Mammary epithelial cell (primary cell): ENCODE measurements at regions of chr5 and their contacts with region 1.

Region 1: DNA sequence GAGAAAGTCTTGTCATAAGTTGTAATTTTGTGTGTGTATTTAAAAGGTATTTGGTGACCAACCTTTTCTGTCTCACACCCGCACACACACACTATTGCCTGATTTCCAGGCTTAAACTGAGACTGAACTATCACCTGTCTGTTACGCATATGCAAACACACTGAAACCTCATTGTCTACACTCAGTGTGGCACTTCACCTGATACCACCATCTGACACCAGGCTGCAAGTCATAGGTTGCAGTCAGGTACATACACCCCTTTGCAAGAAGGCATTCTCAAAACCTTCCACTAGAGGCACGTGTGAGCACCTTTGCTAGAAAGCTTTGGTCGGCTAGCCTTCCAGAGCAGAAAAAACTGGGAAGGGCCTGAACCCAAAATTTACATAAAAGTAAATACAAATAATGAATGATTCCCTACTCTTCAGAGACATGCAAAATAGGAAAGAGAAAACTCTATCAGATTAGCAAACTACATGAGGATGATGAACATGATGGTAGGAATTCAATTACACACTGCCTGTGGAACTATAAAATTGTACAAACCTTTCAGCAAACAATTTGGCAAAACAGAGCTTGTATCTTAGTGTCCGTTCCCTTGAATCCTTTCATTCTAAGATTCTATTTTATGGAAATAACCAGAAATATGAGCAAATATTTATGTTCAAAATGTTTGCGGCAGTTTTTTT is 5.9 kb upstream of the FOXD1 start:
- DNase-seq: peak; percentile 69
- H3K4me3 ChIP-seq: no peak overlapping the region
- H3K27ac ChIP-seq: no peak overlapping the region
- H3K4me1 ChIP-seq: peaks cover 12% of the 10 kb centered on the region
- H3K27me3 ChIP-seq: peaks cover 3% of the 10 kb centered on the region
- CTCF ChIP-seq: peak; percentile 92 to 98

Region 2: GRCh38 chr5:73088026-73088425 is 366.5 kb before region 1 on chr5:
- CTCF ChIA-PET with region 1: interaction called, 30 read pairs
- dilution Hi-C with region 1: no loop called
- in situ Hi-C with region 1: no loop called
- intact Hi-C with region 1: loop called (anchors 1 kb)
- DNase-seq: no peak
- H3K4me3 ChIP-seq: no peak overlapping the region
- H3K27ac ChIP-seq: no peak overlapping the region
- H3K4me1 ChIP-seq: no peaks in the 10 kb centered on the region
- H3K27me3 ChIP-seq: no peaks in the 10 kb centered on the region
- CTCF ChIP-seq: no peak

Region 3: GRCh38 chr5:73498057-73499008 is 43.8 kb after region 1 on chr5 and contains the start of gene BTF3:
- CTCF ChIA-PET with region 1: interaction called, 4 read pairs
- dilution Hi-C with region 1: no loop called
- in situ Hi-C with region 1: no loop called
- intact Hi-C with region 1: loop called (anchors 2 kb)
- DNase-seq: peak; percentile 96
- H3K4me3 ChIP-seq: peak within 1 kb of the TSS; percentile 90 to 97 (median 92)
- H3K27ac ChIP-seq: peak within 1 kb of the TSS; percentile 95
- H3K4me1 ChIP-seq: peaks cover 8% of the 10 kb centered on the region
- H3K27me3 ChIP-seq: no peaks in the 10 kb centered on the region
- CTCF ChIP-seq: no peak
- total RNA-seq, gene BTF3: 365 to 681 TPM

Region 4: GRCh38 chr5:73540192-73540591 is 85.7 kb after region 1 on chr5:
- CTCF ChIA-PET with region 1: no interaction called
- dilution Hi-C with region 1: no loop called
- in situ Hi-C with region 1: no loop called
- intact Hi-C with region 1: loop called (anchors 1 kb)
- DNase-seq: peak; percentile 94
- H3K4me3 ChIP-seq: no peak overlapping the region
- H3K27ac ChIP-seq: no peak overlapping the region
- H3K4me1 ChIP-seq: peaks cover 45% of the 10 kb centered on the region
- H3K27me3 ChIP-seq: no peaks in the 10 kb centered on the region
- CTCF ChIP-seq: no peak